IMR-90 (cell line): ENCODE measurements at regions of chr1 and their contacts with region 1.

Region 1: DNA sequence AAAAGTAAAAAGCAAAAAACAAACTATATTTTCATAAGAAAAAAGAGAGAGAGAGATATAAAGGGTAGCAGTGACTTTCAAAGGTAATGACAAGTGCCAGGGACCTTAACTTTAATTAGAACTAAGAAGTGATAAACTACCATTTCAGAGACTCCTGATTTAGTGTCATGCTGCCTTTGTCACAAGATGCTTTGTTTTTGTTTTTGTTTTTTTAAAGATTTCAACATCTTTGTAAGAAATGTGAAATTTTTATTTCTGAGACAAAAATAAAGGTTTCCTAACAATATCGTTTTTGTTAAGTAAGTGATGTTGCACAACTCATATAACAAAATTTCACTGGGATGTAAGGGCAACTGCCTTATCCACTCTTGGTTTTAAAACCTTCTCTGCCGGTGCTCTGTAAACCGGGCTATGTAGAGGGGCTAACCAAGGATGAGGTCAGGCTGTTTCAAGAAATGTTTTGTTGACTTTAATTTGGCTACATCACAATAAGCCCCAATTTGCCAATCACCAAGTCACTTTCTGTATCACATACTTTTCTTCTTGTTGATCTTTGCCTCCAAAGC is 35.2 kb upstream of the SYT2 start:
- DNase-seq: no peak
- ATAC-seq: no peak
- H3K4me3 ChIP-seq: no peak overlapping the region
- H3K27ac ChIP-seq: no peak overlapping the region
- H3K4me1 ChIP-seq: 0 out of 2 replicates have a peak, but pooled peaks cover 1% of the 10 kb centered on the region
- H3K27me3 ChIP-seq: no peaks in the 10 kb centered on the region
- CTCF ChIP-seq: no peak
- POLR2A ChIP-seq: no peak
- RAD21 ChIP-seq: no peak

Region 2: DNA sequence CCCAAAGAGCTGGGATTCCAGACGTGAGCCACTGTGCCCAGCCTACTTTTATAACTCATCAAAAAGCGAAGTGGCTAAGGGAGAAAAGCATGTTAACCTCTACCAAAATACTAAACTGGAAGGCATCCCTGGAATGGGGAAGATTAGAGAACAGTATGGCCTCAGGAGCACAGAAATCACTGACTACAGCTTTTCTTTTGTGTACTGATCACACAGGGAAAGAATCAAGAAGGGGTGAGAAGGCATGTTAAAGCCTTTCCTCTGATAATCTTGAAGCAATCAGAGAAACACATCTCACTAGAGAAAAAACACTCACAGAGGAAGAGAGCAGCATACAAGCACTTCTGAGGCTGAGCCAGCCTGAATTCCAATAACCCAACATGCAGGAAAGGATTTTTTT is 76.0 kb after region 1 on chr1:
- CTCF ChIA-PET with region 1: no interaction called
- POLR2A ChIA-PET with region 1: no interaction called
- dilution Hi-C with region 1: no loop called
- in situ Hi-C with region 1: no loop called
- intact Hi-C with region 1: no loop called
- DNase-seq: peak; percentile 58
- ATAC-seq: peak; percentile 91
- H3K4me3 ChIP-seq: no peak overlapping the region
- H3K27ac ChIP-seq: no peak overlapping the region
- H3K4me1 ChIP-seq: no peaks in the 10 kb centered on the region
- H3K27me3 ChIP-seq: peaks cover 31% of the 10 kb centered on the region
- CTCF ChIP-seq: no peak
- POLR2A ChIP-seq: no peak
- RAD21 ChIP-seq: no peak

Region 3: DNA sequence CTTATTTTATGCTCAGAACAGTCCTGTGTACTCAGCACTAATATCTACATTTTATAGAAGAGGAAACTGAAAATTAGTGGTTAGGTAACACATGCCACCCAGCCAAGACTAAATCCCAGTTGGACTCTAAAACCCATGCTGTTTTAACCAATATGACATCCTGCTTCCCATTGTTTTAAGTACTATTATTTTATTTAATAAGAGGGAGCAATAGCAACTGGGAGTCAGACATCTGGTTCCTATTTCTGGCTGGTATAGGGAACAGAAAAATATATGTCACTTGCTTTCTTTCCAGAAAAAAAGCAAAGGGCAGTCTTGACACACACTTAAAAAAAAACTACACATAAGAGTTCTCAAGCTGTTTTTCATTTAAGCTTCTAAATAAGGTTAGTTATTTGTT is 169.7 kb after region 1 on chr1:
- CTCF ChIA-PET with region 1: no interaction called
- POLR2A ChIA-PET with region 1: no interaction called
- dilution Hi-C with region 1: no loop called
- in situ Hi-C with region 1: loop called (anchors 10 kb)
- intact Hi-C with region 1: loop called (anchors 5 kb)
- DNase-seq: no peak
- ATAC-seq: no peak
- H3K4me3 ChIP-seq: no peak overlapping the region
- H3K27ac ChIP-seq: no peak overlapping the region
- H3K4me1 ChIP-seq: no peaks in the 10 kb centered on the region
- H3K27me3 ChIP-seq: no peaks in the 10 kb centered on the region
- CTCF ChIP-seq: no peak
- POLR2A ChIP-seq: no peak
- RAD21 ChIP-seq: no peak